ENCODE measurements at regions of chr15 and their contacts with region 1.

Region 1: DNA sequence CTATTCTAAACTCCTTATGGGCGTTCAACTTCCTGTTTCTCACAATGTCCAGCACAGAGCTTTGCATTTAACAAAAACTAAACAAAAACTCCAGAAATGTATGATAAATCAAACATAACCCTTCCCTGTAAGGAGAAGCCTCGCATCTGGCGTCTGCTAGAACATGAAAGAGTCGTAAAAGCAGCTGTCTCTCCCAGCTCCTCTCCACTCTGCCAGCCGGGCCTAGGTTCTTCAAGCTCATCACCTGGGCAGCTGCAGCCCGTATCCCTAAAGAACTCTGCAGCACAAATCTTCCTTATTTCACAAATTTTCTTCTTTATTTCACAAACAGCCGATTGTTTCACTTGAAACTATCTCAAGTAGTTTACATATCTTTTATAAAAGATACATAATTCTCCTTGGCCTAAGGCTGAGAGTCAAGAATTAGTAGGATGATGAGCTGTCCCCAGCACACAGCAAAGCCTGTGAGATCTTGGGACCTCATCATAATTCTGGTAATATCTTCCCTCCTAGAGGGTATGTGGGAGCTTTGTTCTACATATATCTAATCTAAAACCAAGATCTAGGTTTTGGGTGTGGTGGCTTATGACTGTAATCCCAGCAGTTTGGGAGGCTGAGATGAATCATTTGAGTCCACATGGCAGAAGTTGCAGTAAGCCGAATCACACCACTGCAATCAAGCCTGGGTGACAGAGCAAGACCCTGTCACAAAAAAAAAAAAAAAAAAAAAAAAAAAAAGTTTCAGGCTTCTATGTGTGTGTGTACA is 35.3 kb downstream of the ANXA2 start:
- DNase-seq: peak; percentile 82
- H3K4me3 Mint-ChIP-seq: peak overlapping the region; percentile 41
- H3K27ac Mint-ChIP-seq: peak overlapping the region; percentile 80
- H3K4me1 Mint-ChIP-seq: peaks cover 34% of the 10 kb centered on the region
- H3K27me3 Mint-ChIP-seq: no peaks in the 10 kb centered on the region

Region 2: GRCh38 chr15:60179786-60180391 is 182.6 kb before region 1 on chr15:
- intact Hi-C with region 1: no loop called
- DNase-seq: peak; percentile 77
- H3K4me3 Mint-ChIP-seq: no peak overlapping the region
- H3K27ac Mint-ChIP-seq: no peak overlapping the region
- H3K4me1 Mint-ChIP-seq: no peaks in the 10 kb centered on the region
- H3K27me3 Mint-ChIP-seq: peaks cover 33% of the 10 kb centered on the region

Region 3: DNA sequence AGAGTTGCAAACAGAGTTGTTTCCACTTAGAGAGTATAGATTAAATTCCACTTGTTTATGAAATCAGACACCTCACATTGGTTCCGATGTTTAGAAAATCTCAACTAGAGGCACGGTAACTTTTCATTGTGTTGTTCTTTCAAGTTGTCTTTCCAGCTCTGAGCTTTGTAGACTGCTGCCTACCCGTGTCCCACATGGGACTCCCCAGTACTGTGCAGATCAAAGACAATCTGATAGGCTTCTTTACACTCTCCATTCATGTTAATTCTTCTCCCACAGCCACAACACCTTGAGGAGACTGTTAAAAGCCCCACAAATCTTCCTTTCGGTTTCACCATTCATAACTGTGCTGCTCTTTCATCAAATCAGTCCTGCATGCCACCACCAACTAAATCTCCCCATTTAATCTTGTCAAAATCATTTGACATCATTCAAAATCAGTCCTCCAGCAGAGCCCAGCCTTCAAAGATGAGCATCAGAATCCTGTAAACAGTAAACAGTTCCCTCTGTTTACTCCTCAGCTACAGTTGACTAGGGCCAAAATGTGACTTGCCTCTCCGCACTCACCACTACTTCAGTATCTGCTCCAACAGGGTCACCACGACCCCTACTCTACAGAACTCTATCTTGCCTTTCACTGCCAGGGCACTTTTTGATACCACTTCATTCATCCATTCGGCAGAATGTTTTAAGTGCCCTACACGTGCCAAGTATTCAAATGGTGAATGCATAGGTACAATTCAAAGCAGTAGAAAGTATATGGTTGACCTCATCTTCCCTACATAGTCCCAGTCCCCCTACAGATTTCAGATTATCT is 27.0 kb after region 1 on chr15:
- intact Hi-C with region 1: loop called (anchors 2 kb)
- DNase-seq: peak; percentile 89
- H3K4me3 Mint-ChIP-seq: peak overlapping the region; percentile 37
- H3K27ac Mint-ChIP-seq: peak overlapping the region; percentile 51
- H3K4me1 Mint-ChIP-seq: peaks cover 64% of the 10 kb centered on the region
- H3K27me3 Mint-ChIP-seq: no peaks in the 10 kb centered on the region

Region 4: GRCh38 chr15:60444289-60444912 is 81.9 kb after region 1 on chr15:
- intact Hi-C with region 1: loop called (anchors 2 kb)
- DNase-seq: no peak
- H3K4me3 Mint-ChIP-seq: no peak overlapping the region
- H3K27ac Mint-ChIP-seq: no peak overlapping the region
- H3K4me1 Mint-ChIP-seq: peaks cover 6% of the 10 kb centered on the region
- H3K27me3 Mint-ChIP-seq: no peaks in the 10 kb centered on the region

Region 5: GRCh38 chr15:60507596-60508424 is 145.3 kb after region 1 on chr15:
- intact Hi-C with region 1: loop called (anchors 1 kb)
- DNase-seq: peak; percentile 88
- H3K4me3 Mint-ChIP-seq: peak overlapping the region; percentile 15
- H3K27ac Mint-ChIP-seq: peak overlapping the region; percentile 62
- H3K4me1 Mint-ChIP-seq: peaks cover 29% of the 10 kb centered on the region
- H3K27me3 Mint-ChIP-seq: no peaks in the 10 kb centered on the region

Region 6: DNA sequence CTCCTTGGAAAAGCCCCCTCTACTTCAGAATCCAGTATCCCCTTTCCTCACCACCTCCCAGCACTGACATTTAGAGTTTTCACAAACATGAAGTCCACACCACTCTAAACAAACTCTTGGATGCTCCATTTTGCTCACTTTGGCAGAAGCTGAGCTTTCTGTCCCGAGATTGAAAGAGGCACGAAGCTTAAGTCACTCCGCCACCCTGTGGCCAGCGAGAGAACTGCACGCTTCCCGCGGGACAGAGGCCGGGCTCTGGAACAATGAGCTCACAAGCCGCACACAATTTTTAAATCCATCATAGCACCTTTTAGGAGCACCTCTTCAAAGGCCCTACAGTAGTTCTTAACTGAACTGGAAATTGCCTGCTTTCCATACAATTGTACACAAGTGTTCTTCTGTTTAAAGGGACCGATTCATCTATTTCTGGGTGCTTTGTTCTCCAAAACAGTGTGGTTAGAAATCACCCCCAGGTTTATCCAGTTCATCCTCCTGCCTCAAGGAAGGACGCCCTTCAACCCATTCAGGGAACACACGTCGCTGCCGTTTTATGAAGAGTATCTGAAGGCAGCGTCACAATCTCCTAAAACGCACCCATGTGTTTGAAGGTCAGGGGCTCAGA is 1471.7 kb after region 1 on chr15:
- intact Hi-C with region 1: loop called (anchors 5 kb)
- DNase-seq: peak; percentile 92
- H3K4me3 Mint-ChIP-seq: no peak overlapping the region
- H3K27ac Mint-ChIP-seq: no peak overlapping the region
- H3K4me1 Mint-ChIP-seq: peaks cover 5% of the 10 kb centered on the region
- H3K27me3 Mint-ChIP-seq: peaks cover 15% of the 10 kb centered on the region

Measured in activated CD4-positive, alpha-beta T cell treated with anti-CD3 and anti-CD28 coated beads, Interleukin-2, amount 10 ng/mL, durations not matched to agents 24 days and 14 days (primary cell).